ENCODE measurements at regions of chr11 and their contacts with region 1.

Region 1: DNA sequence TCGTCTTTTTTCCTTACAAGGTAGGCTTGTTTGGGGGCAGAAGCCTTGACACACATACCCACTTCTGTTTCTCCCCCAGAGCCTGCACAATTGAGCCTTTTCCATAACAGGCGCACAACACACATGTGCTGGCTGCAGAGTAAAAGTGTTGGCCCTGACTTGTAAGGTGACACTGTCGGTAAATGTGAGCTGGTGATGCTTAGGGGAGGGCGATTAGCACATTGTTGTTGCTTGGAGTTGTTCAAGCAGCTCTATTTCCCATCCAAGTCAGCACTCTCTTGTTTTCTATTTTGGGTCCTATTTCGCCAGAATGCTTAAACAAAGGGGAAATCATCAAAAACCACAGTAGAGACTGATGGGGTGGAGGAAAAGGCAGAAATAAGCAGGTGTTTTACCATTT is 51.9 kb upstream of the PTPRJ start:
- DNase-seq: no peak
- ATAC-seq: no peak
- H3K4me3 ChIP-seq: no peak overlapping the region
- H3K27ac ChIP-seq: no peak overlapping the region
- H3K4me1 ChIP-seq: peaks cover 10% of the 10 kb centered on the region
- H3K27me3 ChIP-seq: no peaks in the 10 kb centered on the region
- CTCF ChIP-seq: no peak

Region 2: GRCh38 chr11:48172818-48173609 is 244.6 kb after region 1 on chr11:
- CTCF ChIA-PET with region 1: no interaction called
- POLR2A ChIA-PET with region 1: no interaction called
- intact Hi-C with region 1: loop called (anchors 5 kb)
- DNase-seq: peak; percentile 74
- ATAC-seq: peak; percentile 88
- H3K4me3 ChIP-seq: no peak overlapping the region
- H3K27ac ChIP-seq: no peak overlapping the region
- H3K4me1 ChIP-seq: no peaks in the 10 kb centered on the region
- H3K27me3 ChIP-seq: no peaks in the 10 kb centered on the region
- CTCF ChIP-seq: peak; percentile 87

Measured in PC-3 (cell line).